ENCODE measurements at regions of chr1 and their contacts with region 1.

Region 1: DNA sequence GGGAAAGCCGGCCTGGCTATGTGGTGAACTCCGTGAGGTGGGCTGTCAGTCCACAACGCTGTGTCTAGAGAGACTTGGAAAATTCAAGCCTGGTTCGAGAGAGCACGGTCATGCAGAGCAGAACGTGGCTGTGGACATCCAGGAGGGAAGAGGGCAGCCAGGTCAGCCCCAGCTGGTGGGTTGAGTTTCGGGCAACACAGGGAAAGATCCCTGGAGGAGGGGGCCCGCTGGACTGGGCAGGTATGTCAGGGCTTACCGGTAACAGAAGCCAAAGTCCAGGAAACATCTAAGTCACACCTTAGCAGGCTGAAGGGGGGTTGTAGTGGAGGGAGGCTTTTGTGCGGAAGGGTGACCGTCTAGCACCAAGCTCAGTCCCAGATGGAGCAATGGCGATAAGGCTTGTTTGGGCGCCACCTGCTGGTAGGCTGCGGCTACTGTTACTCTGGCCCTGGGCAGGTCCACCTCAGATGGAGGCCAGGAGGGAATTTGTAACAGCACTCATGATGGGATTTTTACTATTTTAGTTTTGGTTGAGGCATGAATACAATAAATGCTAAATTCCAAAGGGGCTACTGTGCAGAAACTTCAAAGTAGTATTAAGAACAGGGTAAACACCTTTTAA is 143.3 kb upstream of the ZNF644 start:
- DNase-seq: peak; percentile 95
- ATAC-seq: peak; percentile 96
- H3K4me3 Mint-ChIP-seq: no peak overlapping the region
- H3K27ac Mint-ChIP-seq: no peak overlapping the region
- H3K4me1 Mint-ChIP-seq: peaks cover 29% of the 10 kb centered on the region
- H3K27me3 Mint-ChIP-seq: peaks cover 6% of the 10 kb centered on the region
- CTCF ChIP-seq: peak; percentile 97

Region 2: GRCh38 chr1:90973897-90974798 is 191.0 kb before region 1 on chr1:
- CTCF ChIA-PET with region 1: interaction called, 12 read pairs
- POLR2A ChIA-PET with region 1: no interaction called
- DNase-seq: no peak
- ATAC-seq: peak; percentile 94
- H3K4me3 Mint-ChIP-seq: peak overlapping the region; percentile 5; the same call in 1 of the 2 replicates
- H3K27ac Mint-ChIP-seq: peak overlapping the region; percentile 66
- H3K4me1 Mint-ChIP-seq: peaks cover 59% of the 10 kb centered on the region
- H3K27me3 Mint-ChIP-seq: no peaks in the 10 kb centered on the region
- CTCF ChIP-seq: no peak

Region 3: GRCh38 chr1:91021686-91022517 is 143.2 kb before region 1 on chr1 and contains the start of gene ZNF644:
- CTCF ChIA-PET with region 1: interaction called, 43 read pairs
- POLR2A ChIA-PET with region 1: interaction called, 3 read pairs
- DNase-seq: peak; percentile 85
- ATAC-seq: peak; percentile 78
- H3K4me3 Mint-ChIP-seq: peak within 1 kb of the TSS; percentile 95
- H3K27ac Mint-ChIP-seq: peak within 1 kb of the TSS; percentile 99
- H3K4me1 Mint-ChIP-seq: peaks cover 43% of the 10 kb centered on the region
- H3K27me3 Mint-ChIP-seq: no peaks in the 10 kb centered on the region
- CTCF ChIP-seq: no peak
- total RNA-seq, gene ZNF644: 71.4 to 78.1 TPM (median 74.7 TPM) in 3 replicates

Region 4: GRCh38 chr1:91104712-91105111 is 60.4 kb before region 1 on chr1:
- CTCF ChIA-PET with region 1: interaction called, 18 read pairs
- POLR2A ChIA-PET with region 1: no interaction called
- DNase-seq: no peak
- ATAC-seq: peak; percentile 53
- H3K4me3 Mint-ChIP-seq: peak overlapping the region; percentile 18
- H3K27ac Mint-ChIP-seq: peak overlapping the region; percentile 95
- H3K4me1 Mint-ChIP-seq: peaks cover 53% of the 10 kb centered on the region
- H3K27me3 Mint-ChIP-seq: no peaks in the 10 kb centered on the region
- CTCF ChIP-seq: no peak

Region 5: DNA sequence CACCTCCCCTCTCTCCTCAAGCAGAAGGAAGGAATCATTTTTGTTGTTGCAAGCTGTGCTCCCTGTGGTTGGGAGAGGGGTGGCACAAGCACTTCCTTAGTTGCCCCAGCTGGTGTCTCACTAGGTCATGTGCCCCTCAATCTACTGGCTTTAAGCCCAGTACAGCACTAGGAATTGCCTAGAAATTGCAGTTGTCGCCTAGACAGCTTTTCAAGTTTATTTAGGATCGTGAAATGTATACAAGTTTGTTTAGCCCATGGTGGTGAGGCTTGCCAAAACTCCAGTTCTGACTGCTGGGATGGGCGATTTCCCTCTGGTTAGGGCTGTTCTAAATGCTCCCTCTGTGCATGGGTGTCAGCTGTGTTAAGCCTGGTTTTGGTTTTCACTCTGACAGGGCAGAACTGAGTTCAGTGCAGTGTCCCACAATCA is 16.5 kb before region 1 on chr1:
- CTCF ChIA-PET with region 1: interaction called, 63 read pairs
- POLR2A ChIA-PET with region 1: no interaction called
- DNase-seq: no peak
- ATAC-seq: peak; percentile 88
- H3K4me3 Mint-ChIP-seq: no peak overlapping the region
- H3K27ac Mint-ChIP-seq: no peak overlapping the region
- H3K4me1 Mint-ChIP-seq: peaks cover 13% of the 10 kb centered on the region
- H3K27me3 Mint-ChIP-seq: no peaks in the 10 kb centered on the region
- CTCF ChIP-seq: no peak

Region 6: DNA sequence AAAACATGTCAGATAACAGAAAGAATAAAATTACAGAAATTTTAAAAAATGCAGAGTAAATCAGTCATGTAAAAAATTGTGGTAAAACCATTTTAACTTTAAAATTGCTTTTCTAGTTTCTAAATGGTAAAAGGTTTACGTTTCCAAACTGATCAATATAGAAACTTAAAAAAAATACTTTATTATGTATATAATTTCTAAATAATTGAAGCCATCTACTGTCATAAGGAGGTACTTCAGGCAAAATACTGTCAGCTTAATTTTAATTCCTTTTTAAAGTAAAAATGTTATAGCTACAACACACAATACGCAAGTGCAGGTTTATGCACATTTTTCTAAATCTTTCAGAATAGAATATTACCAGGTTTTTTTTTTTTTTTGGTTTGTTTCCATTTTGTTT is 79.6 kb after region 1 on chr1:
- CTCF ChIA-PET with region 1: interaction called, 39 read pairs
- POLR2A ChIA-PET with region 1: no interaction called
- DNase-seq: no peak
- ATAC-seq: no peak
- H3K4me3 Mint-ChIP-seq: no peak overlapping the region
- H3K27ac Mint-ChIP-seq: no peak overlapping the region
- H3K4me1 Mint-ChIP-seq: peaks cover 7% of the 10 kb centered on the region
- H3K27me3 Mint-ChIP-seq: no peaks in the 10 kb centered on the region; the same call in 1 of the 2 replicates
- CTCF ChIP-seq: no peak

Region 7: GRCh38 chr1:91404151-91405012 is 239.2 kb after region 1 on chr1 and contains the start of gene HFM1:
- CTCF ChIA-PET with region 1: interaction called, 22 read pairs
- POLR2A ChIA-PET with region 1: no interaction called
- DNase-seq: peak; percentile 85
- ATAC-seq: peak; percentile 96
- H3K4me3 Mint-ChIP-seq: peak within 1 kb of the TSS; percentile 92
- H3K27ac Mint-ChIP-seq: peak within 1 kb of the TSS; percentile 98
- H3K4me1 Mint-ChIP-seq: peaks cover 18% of the 10 kb centered on the region
- H3K27me3 Mint-ChIP-seq: no peaks in the 10 kb centered on the region
- CTCF ChIP-seq: no peak
- total RNA-seq, gene HFM1: 1.7 to 3.8 TPM (median 3.4 TPM) in 3 replicates